T-cell (primary cell): ENCODE measurements at regions of chr10 and their contacts with region 1.

Region 1: DNA sequence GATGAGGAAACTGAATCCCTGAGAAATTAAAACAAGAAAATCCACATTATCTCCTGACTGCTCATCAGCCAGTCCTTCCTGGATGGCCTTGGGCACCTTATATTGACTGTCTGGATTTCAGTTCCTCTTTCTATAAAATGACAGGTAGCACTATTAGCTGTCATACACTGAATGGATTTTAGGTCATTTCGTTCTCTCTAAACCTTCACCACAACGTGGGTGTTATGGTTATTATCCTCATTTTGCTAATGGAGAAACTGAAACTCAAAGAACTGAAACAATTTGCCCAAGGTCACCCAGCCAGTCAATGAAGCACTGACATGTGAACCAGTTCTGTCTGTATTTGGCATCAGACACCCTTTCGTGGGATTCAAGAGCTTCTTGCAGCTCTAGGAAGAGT is 193.8 kb downstream of the CYP26A1 start:
- DNase-seq: no peak
- ATAC-seq: no peak
- H3K4me3 ChIP-seq: no peak overlapping the region
- H3K4me3 Mint-ChIP-seq: no peak overlapping the region
- H3K27ac ChIP-seq: no peak overlapping the region
- H3K27ac Mint-ChIP-seq: no peak overlapping the region
- H3K4me1 ChIP-seq: no peaks in the 10 kb centered on the region
- H3K4me1 Mint-ChIP-seq: peaks cover 2 to 11% (median 6%) of the 10 kb centered on the region in 3 donors
- H3K27me3 ChIP-seq: no peaks in the 10 kb centered on the region
- H3K27me3 Mint-ChIP-seq: no peaks in the 10 kb centered on the region

Region 2: DNA sequence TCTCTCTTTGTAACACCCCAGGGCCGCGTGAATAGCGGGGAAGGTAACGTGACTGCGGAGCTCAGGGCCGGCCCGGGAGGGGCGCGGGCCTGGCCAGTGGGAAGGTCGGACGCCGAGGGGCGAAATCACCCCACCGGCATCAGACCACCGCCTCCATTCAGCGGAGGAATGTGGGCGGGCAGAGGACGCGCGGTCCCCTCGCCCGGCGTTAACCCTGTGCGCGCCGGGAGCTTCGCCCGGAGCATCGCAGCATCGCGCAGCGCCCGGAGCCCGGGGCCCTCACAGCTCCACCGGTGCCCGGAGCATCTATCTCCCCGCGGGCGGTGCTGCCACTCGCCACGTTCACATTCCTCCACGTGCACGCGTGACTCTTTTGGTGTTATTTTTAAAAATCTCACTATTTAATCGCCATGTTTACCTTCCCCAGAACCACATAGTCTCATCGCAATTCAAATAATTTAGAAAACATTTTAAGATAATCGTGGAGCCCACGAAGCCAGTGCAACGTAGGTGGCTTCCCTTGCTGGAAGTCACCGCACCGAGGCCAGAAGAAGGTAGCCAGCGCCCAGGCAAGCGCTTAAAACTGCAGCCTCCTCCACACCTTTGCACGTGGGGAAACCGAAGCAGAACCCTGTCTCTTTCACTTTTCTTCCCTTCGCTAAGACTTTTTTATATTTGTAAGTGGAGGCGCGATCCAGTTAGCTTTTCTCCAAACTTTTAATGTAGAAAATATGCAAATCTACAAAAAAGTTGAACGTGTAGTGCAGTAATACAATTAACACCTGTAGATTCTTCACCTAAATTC is 1380.0 kb before region 1 on chr10:
- CTCF ChIA-PET with region 1: no interaction called
- POLR2A ChIA-PET with region 1: interaction called in 1 of 2 experiments, 11 read pairs
- DNase-seq: peak in 19 of 35 experiments; percentile 2 to 34 (median 8)
- ATAC-seq: peak; percentile 68 to 81 (median 78)
- H3K4me3 ChIP-seq: peak overlapping the region; percentile 56 to 88
- H3K4me3 Mint-ChIP-seq: peak overlapping the region; percentile 89 to 91 (median 90)
- H3K27ac ChIP-seq: no peak overlapping the region
- H3K27ac Mint-ChIP-seq: peak overlapping the region in 1 of 2 donors; percentile 68
- H3K4me1 ChIP-seq: peaks cover 6 to 8% of the 10 kb centered on the region in 2 experiments
- H3K4me1 Mint-ChIP-seq: peaks cover 9 to 14% (median 10%) of the 10 kb centered on the region in 3 donors
- H3K27me3 ChIP-seq: peaks cover 0 to 6% of the 10 kb centered on the region in 2 experiments
- H3K27me3 Mint-ChIP-seq: peaks cover 6 to 8% of the 10 kb centered on the region in 2 donors